CD8-positive, alpha-beta T cell (primary cell): ENCODE measurements at regions of chr4 and their contacts with region 1.

Region 1: GRCh38 chr4:142366769-142367181 is 479.3 kb downstream of the INPP4B start:
- DNase-seq: peak in 1 of 9 experiments; percentile 7
- ATAC-seq: peak; percentile 20
- H3K4me3 ChIP-seq: no peak overlapping the region
- H3K4me3 Mint-ChIP-seq: no peak overlapping the region
- H3K27ac ChIP-seq: no peak overlapping the region
- H3K27ac Mint-ChIP-seq: peak overlapping the region; percentile 49
- H3K4me1 ChIP-seq: peaks cover 35% of the 10 kb centered on the region
- H3K4me1 Mint-ChIP-seq: peaks cover 71% of the 10 kb centered on the region
- H3K27me3 ChIP-seq: no peaks in the 10 kb centered on the region
- H3K27me3 Mint-ChIP-seq: no peaks in the 10 kb centered on the region
- CTCF ChIP-seq: no peak

Region 2: DNA sequence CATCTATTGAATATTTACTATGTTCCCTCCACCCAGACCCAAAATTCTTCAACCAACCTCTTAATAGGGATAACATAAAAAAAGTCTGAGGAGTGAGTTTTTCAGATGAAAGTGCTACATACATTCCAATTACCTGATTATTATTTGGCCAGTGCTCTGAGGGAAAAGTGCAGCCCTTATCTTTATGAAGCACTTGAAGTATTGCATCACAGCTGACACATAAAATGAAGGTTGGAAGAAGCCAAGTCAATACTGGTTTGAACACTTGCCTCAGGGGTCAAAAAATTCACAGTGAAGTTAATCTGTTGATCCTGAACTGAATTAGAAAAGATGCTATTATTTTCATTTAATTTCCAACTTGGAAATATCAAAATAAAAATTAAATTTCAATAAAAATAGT is 19.5 kb before region 1 on chr4:
- CTCF ChIA-PET with region 1: interaction called, 4 read pairs
- POLR2A ChIA-PET with region 1: interaction called, 3 read pairs
- intact Hi-C with region 1: loop called in 1 of 2 experiments (anchors 2 kb)
- DNase-seq: no peak
- ATAC-seq: no peak
- H3K4me3 ChIP-seq: no peak overlapping the region
- H3K4me3 Mint-ChIP-seq: peak overlapping the region; percentile 58
- H3K27ac ChIP-seq: no peak overlapping the region
- H3K27ac Mint-ChIP-seq: peak overlapping the region; percentile 5
- H3K4me1 ChIP-seq: peaks cover 44% of the 10 kb centered on the region
- H3K4me1 Mint-ChIP-seq: peaks cover 87% of the 10 kb centered on the region
- H3K27me3 ChIP-seq: no peaks in the 10 kb centered on the region
- H3K27me3 Mint-ChIP-seq: no peaks in the 10 kb centered on the region
- CTCF ChIP-seq: no peak

Region 3: DNA sequence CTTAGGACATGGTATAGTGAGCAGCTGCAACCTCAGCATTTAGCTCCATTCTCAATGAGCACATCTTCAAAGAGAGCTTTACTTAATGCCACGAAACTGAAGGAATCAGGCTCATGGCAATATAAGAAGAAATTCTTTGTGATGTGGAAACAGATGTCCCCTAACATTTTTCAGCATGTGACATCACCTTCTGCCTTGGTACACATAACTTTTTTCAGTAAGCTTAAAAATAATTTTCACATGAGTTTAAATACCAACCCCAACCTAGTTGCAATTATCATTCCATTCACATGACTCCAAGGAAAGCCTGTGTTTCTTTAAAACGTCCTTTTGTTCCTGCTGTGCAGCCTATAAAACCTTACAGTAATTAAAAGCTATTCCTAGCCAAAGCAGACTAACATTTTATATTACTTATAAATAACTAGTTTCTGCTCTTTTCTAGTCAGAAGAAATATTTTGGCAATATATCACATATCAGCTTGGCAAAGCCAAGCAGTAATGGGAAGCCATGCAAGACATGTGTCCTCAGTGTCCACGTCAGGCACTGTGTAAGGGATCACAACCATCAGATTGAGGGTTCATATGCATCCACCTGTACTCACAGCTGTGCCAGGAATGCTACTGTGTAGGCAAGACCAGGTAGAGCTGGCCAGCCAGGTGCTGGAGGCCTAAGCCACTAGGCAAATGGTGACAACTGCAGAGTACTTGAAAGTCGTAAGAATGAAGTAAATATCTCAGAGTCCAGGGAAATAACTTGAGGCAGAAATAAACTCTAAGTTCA is 12.7 kb after region 1 on chr4:
- CTCF ChIA-PET with region 1: interaction called, 6 read pairs
- POLR2A ChIA-PET with region 1: no interaction called
- intact Hi-C with region 1: loop called in 1 of 2 experiments (anchors 1 kb)
- DNase-seq: no peak
- ATAC-seq: no peak
- H3K4me3 ChIP-seq: no peak overlapping the region
- H3K4me3 Mint-ChIP-seq: no peak overlapping the region
- H3K27ac ChIP-seq: no peak overlapping the region
- H3K27ac Mint-ChIP-seq: peak overlapping the region; percentile 83
- H3K4me1 ChIP-seq: peaks cover 48% of the 10 kb centered on the region
- H3K4me1 Mint-ChIP-seq: peaks cover 76% of the 10 kb centered on the region
- H3K27me3 ChIP-seq: no peaks in the 10 kb centered on the region
- H3K27me3 Mint-ChIP-seq: no peaks in the 10 kb centered on the region
- CTCF ChIP-seq: no peak